MCF 10A (cell line): ENCODE measurements at regions of chr7 and their contacts with region 1.

Region 1: GRCh38 chr7:21253740-21254687 is 173.9 kb upstream of the SP4 start:
- DNase-seq: peak; percentile 69
- H3K4me3 Mint-ChIP-seq: no peak overlapping the region
- H3K27ac Mint-ChIP-seq: no peak overlapping the region
- H3K4me1 Mint-ChIP-seq: no peaks in the 10 kb centered on the region
- H3K27me3 Mint-ChIP-seq: peaks cover 10% of the 10 kb centered on the region
- CTCF ChIP-seq: peak; percentile 58

Region 2: GRCh38 chr7:19713676-19714075 is 1540.3 kb before region 1 on chr7:
- CTCF ChIA-PET with region 1: no interaction called
- POLR2A ChIA-PET with region 1: no interaction called
- intact Hi-C with region 1: loop called (anchors 5 kb)
- DNase-seq: peak; percentile 58
- H3K4me3 Mint-ChIP-seq: no peak overlapping the region
- H3K27ac Mint-ChIP-seq: no peak overlapping the region
- H3K4me1 Mint-ChIP-seq: peaks cover 16% of the 10 kb centered on the region
- H3K27me3 Mint-ChIP-seq: no peaks in the 10 kb centered on the region
- CTCF ChIP-seq: peak; percentile 47

Region 3: DNA sequence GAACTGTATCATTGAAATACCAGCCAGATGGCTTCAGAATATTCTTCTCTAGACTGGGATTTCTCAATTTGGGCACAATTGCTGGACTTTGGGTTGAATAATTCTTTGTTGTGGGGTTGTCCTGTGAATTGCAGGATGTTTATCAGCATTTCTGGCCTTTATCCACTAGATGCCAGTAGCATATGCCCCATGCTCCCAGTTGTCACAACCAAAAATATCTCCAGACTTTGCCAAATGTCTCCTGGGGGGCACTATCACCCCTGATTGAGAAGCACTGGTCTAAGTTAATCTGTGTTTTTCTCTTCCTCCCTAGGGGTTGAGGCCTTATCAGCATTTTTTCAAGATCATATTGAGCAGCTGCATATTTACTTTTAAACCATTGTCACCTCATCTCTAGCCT is 262.5 kb before region 1 on chr7:
- CTCF ChIA-PET with region 1: interaction called, 30 read pairs
- POLR2A ChIA-PET with region 1: interaction called, 6 read pairs
- intact Hi-C with region 1: loop called (anchors 1 kb)
- DNase-seq: peak; percentile 24
- H3K4me3 Mint-ChIP-seq: no peak overlapping the region
- H3K27ac Mint-ChIP-seq: no peak overlapping the region
- H3K4me1 Mint-ChIP-seq: no peaks in the 10 kb centered on the region
- H3K27me3 Mint-ChIP-seq: no peaks in the 10 kb centered on the region
- CTCF ChIP-seq: peak; percentile 40

Region 4: DNA sequence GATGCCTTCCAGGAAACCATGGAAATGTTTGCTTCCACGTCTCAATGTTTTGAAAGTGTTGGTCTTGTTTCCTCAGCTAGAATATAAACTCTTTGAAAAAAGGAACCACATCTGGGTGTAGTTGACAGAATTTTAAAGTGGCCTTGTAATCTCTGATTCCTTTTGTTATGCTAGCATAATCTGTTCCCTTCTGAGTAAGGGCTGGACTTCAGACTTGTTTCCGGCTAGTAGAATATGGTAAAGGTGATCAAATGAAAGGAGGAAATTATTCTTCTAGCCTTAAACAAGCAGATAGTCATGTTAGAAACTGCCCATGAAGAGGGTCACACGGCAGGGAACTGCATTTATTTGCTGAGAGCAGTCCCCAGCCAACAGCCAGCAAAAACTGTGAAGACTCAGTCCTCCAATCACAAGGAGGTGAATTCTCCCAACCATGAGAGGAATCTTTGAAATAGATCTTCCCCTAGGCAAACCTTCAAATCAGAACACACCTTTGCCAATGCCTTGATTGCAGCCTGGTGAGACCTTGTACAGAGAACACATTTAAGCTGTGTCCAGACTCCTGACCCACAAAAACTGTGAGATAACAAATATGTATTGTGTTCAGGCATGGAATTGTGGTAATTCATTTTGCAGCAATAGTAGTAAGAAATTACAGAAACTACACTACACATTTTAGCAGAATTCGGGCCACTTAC is 150.4 kb before region 1 on chr7:
- CTCF ChIA-PET with region 1: no interaction called
- POLR2A ChIA-PET with region 1: no interaction called
- intact Hi-C with region 1: no loop called
- DNase-seq: no peak
- H3K4me3 Mint-ChIP-seq: no peak overlapping the region
- H3K27ac Mint-ChIP-seq: peak overlapping the region; percentile 66
- H3K4me1 Mint-ChIP-seq: peaks cover 47% of the 10 kb centered on the region
- H3K27me3 Mint-ChIP-seq: no peaks in the 10 kb centered on the region
- CTCF ChIP-seq: no peak

Region 5: DNA sequence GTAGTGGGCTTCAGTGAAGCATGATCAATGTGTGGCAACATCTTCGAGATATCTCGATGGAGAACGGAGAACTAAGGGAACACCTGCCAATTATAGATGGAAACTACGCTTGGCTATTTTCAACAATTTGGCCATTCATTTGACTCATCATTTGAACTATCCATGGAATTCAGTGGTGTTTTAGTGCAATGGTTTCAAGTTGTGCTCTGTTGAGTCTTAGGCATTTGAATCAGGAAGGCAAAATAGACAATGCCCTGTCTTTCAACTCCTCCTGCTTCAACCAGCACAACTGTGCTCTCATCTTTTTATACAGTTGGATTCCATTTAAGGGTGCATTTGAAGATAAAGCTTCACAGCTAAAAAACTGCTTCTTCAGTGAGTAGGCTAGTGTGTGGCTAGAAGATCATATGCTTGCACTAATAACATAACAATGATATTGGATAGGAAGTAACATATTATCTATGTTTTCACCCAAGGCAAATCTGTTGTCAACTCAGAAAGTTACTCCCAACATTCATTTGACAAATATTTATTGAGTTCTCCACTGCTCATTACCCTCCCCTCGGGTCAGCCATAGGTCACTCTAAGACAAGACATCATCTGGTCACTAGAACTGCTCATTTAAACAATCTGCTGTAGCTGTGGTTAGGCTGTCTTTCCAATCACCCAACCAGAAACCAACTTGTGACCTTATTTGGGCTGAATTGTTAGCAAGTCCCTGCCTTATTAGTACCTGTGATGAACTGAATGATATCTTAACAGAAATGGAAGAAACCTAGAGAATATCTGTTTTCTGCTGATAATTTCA is 140.2 kb before region 1 on chr7:
- CTCF ChIA-PET with region 1: no interaction called
- POLR2A ChIA-PET with region 1: no interaction called
- intact Hi-C with region 1: no loop called
- DNase-seq: no peak
- H3K4me3 Mint-ChIP-seq: no peak overlapping the region
- H3K27ac Mint-ChIP-seq: no peak overlapping the region
- H3K4me1 Mint-ChIP-seq: no peaks in the 10 kb centered on the region
- H3K27me3 Mint-ChIP-seq: no peaks in the 10 kb centered on the region
- CTCF ChIP-seq: no peak

Region 6: DNA sequence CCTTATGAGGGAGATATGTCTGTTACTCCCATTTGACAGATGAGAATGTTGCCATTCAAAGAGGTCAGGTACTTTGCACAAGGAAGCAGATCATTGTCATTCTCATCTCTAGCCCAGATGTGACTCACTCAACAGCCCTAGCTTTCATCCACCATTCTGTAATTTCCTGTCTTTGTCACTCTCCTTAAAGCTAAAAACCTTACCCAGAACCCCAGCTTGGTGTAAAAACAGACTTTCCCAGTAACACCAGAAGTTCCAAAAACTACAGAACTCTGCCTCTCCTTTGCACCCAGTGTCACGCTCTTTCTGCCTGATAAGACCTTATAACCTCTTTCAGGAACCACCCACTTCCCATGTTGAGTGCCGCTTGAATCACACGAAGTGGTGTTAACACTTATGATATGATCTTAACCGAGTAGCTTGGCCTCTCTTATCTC is 84.7 kb after region 1 on chr7:
- CTCF ChIA-PET with region 1: no interaction called
- POLR2A ChIA-PET with region 1: no interaction called
- intact Hi-C with region 1: no loop called
- DNase-seq: no peak
- H3K4me3 Mint-ChIP-seq: no peak overlapping the region
- H3K27ac Mint-ChIP-seq: no peak overlapping the region
- H3K4me1 Mint-ChIP-seq: no peaks in the 10 kb centered on the region
- H3K27me3 Mint-ChIP-seq: no peaks in the 10 kb centered on the region
- CTCF ChIP-seq: no peak

Region 7: DNA sequence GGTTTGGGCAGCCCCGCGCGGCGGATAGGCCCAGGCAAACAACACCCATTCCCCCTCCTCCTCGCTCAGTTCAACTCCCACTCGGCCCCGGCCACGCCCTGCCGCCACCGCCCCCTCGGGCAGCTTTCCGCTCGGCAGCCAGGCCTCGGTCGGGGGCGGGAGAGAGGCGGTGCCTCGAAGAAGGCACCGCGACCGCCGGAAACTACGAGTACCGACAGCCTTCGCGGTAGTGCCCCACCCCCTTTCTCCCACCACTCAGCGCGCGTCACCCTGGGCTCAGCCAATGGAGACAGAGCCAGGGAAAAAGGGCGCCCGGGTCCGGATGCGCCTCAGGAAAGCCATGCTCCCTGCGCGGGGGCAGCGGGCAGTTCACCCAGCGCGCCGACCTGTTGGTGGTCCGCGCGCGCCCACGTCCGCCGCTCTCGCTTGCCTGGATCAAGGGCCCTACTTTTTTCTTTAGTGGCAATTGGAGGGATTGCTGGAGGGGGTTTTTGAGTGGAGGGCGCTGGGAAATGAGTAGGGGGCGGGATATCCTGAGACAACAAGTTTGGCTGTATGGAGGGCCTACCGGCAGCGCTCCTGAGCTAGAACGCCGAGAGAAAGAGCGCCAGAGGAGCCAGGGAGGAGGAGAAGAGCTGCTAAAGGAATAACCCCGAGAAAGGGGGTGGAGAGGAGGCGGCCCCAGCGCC is 173.3 kb after region 1 on chr7:
- CTCF ChIA-PET with region 1: interaction called, 9 read pairs
- POLR2A ChIA-PET with region 1: interaction called, 3 read pairs
- intact Hi-C with region 1: loop called (anchors 5 kb)
- DNase-seq: peak; percentile 98
- H3K4me3 Mint-ChIP-seq: peak overlapping the region; percentile 100
- H3K27ac Mint-ChIP-seq: peak overlapping the region; percentile 99
- H3K4me1 Mint-ChIP-seq: peaks cover 6% of the 10 kb centered on the region
- H3K27me3 Mint-ChIP-seq: no peaks in the 10 kb centered on the region
- CTCF ChIP-seq: no peak

Region 8: DNA sequence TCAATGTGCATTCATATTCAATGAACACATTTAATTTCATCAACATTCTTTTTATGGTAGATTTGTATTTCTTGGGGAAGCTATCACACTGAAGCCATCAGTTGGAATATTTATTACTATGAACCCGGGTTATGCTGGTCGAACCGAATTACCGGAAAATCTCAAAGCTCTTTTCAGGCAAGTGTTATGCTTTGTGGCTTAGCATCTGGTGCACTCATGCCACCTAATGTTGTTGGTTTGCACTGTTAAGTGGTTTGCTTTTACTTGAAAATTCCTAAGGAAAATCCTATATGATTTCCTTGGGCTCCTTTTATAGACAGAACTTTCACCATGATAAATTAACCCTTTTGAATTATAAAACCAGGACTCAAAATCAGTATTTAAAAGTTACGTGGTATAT is 436.7 kb after region 1 on chr7:
- CTCF ChIA-PET with region 1: interaction called, 7 read pairs
- POLR2A ChIA-PET with region 1: no interaction called
- intact Hi-C with region 1: loop called (anchors 5 kb)
- DNase-seq: peak; percentile 10
- H3K4me3 Mint-ChIP-seq: no peak overlapping the region
- H3K27ac Mint-ChIP-seq: no peak overlapping the region
- H3K4me1 Mint-ChIP-seq: no peaks in the 10 kb centered on the region
- H3K27me3 Mint-ChIP-seq: no peaks in the 10 kb centered on the region
- CTCF ChIP-seq: no peak

Region 9: DNA sequence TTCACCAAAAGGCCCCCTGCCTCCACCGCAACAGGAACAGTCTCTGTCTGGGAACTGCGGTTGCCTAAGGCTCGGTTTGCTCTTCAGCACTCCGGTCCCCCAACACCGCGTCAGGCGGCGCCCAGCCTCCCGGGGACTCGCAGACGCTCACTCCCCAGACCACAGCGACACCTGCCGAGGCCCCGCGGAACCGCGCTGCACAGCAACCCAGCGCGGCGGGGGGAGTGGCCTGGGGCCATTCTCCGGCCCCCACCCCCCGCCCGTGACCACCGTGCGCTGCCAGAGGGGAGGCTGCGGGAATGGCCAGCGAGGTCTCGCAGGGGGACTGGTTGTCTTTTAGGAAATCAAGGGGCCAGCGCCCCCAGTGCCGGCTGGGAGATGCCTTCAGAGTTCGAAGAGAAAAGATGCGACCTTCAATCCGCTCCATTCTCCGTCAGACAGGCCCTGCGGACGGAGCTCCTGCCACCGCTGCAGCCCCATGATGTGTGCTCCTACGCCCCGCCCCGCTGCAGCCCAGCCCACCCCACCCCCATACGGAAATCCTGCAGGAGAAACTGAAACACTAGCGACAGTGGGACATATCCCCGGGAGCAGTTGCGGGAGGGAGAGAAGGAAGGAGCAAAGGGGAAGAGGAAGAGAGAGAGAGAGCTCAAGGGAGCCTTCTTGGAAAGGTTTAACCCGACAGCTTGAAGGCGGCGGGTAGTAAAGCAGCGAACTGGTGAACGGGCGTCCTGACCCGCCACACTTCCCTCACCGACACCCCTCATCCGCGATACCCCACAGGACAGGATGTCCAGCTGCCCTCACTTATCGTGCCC is 829.1 kb after region 1 on chr7:
- CTCF ChIA-PET with region 1: interaction called, 3 read pairs
- POLR2A ChIA-PET with region 1: no interaction called
- intact Hi-C with region 1: loop called (anchors 2 kb)
- DNase-seq: peak; percentile 76
- H3K4me3 Mint-ChIP-seq: peak overlapping the region; percentile 73
- H3K27ac Mint-ChIP-seq: peak overlapping the region; percentile 73
- H3K4me1 Mint-ChIP-seq: no peaks in the 10 kb centered on the region
- H3K27me3 Mint-ChIP-seq: peaks cover 22% of the 10 kb centered on the region
- CTCF ChIP-seq: peak; percentile 93